Endothelial cell of umbilical vein (primary cell): ENCODE measurements at regions of chr1 and their contacts with region 1.

Region 1: GRCh38 chr1:241531195-241532161 is 700 bp upstream of the KMO start:
- DNase-seq: peak; percentile 79
- H3K4me3 ChIP-seq: peak overlapping the region; percentile 35 to 93 (median 84)
- H3K27ac ChIP-seq: no peak overlapping the region
- H3K4me1 ChIP-seq: peaks cover 8% of the 10 kb centered on the region
- H3K27me3 ChIP-seq: peaks cover 22 to 57% of the 10 kb centered on the region in 2 experiments
- CTCF ChIP-seq: peak; percentile 31 to 34
- POLR2A ChIP-seq: no peak

Region 2: GRCh38 chr1:241507189-241507863 is 24.2 kb before region 1 on chr1:
- CTCF ChIA-PET with region 1: no interaction called
- POLR2A ChIA-PET with region 1: no interaction called
- dilution Hi-C with region 1: no loop called
- intact Hi-C with region 1: no loop called
- DNase-seq: peak; percentile 36
- H3K4me3 ChIP-seq: no peak overlapping the region
- H3K27ac ChIP-seq: peak overlapping the region; percentile 45
- H3K4me1 ChIP-seq: peaks cover 26% of the 10 kb centered on the region
- H3K27me3 ChIP-seq: no peaks in the 10 kb centered on the region
- CTCF ChIP-seq: no peak
- POLR2A ChIP-seq: no peak

Region 3: DNA sequence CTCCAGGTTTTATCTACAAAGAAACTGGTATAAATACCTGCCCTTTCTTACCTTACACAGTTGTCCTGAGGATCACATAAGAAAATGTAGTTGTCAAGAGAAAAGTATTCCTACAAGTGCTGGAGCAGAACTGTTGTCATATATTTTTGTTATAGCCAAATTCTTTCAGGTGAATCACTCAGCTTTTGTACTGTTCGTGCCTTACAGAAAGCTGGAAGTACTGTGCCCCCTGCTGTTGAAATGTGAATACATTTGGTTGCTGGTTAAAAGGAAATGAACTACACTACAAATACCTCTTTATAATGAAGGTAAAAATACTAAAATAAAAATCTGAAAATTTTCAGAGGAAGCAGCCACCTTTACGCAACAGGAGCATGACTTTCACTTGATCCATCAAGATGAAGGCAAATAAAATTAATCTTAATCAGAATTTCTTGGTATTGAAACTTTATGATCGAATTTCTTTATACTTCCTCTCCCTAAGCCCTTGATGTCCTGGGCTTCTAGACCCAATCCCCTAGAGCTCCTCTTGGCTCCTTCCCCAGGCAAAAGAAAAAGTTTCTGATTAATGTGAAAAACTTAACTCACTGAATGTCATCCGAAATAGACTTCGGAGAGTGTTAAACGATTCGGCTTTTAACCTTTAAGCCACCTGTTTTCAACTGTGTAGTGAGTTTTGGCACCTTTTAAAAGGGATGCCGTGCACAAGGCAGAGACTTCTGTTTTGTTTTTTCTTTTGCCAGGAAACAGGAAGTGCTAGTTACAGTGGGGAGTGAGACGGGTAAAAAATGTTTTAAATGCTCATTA is 96.2 kb after region 1 on chr1:
- CTCF ChIA-PET with region 1: interaction called, 8 read pairs
- POLR2A ChIA-PET with region 1: no interaction called
- dilution Hi-C with region 1: no loop called
- intact Hi-C with region 1: loop called (anchors 1 kb)
- DNase-seq: peak; percentile 72
- H3K4me3 ChIP-seq: no peak overlapping the region
- H3K27ac ChIP-seq: no peak overlapping the region
- H3K4me1 ChIP-seq: no peaks in the 10 kb centered on the region
- H3K27me3 ChIP-seq: no peaks in the 10 kb centered on the region
- CTCF ChIP-seq: peak; percentile 39 to 51
- POLR2A ChIP-seq: no peak

Region 4: DNA sequence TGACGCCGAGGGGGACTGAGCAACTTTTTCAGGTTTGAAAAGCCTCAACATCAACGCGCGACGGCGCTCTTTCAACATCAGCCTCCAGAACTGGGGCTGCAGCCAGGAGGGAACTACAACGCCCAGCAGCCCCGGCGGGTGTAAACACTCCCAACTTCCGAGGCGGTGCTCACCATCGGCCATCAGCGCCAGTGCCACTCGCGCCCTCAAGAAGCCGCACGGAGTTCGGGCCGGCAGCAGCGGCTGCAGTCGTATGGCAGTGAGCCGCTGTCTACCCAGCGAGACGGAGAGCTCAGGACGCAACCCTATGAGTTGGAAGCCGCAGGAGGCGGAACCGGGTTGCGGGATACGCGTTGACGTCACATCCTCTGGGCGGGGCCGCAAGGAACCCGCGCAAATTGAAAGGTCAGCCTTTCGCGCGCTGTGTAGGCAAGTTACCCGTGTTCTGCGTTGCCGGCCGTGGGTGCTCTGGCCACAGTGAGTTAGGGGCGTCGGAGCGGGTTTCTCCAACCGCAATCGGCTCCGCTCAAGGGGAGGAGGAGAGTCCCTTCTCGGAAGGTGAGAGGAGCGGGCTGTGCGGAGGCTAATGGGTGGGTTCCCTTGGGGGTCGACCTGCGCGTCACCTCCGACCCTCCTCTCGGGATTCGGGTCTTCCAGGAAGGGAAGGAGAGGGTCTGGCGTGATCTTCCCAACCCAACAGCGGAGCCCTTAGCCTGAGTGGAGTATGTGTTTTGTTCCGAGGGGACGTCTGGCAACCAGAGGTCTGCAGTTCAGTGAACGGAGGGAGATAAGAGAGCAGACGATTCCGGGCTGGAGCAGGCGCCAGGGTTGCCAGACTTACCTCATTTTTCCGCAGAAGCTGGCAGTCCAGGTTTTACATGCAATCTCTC is 316.6 kb after region 1 on chr1 and contains the start of gene EXO1:
- CTCF ChIA-PET with region 1: interaction called, 4 read pairs
- POLR2A ChIA-PET with region 1: no interaction called
- dilution Hi-C with region 1: no loop called
- intact Hi-C with region 1: loop called (anchors 1 kb)
- DNase-seq: peak; percentile 94
- H3K4me3 ChIP-seq: peak within 1 kb of the TSS; percentile 33 to 69 (median 61)
- H3K27ac ChIP-seq: peak within 1 kb of the TSS; percentile 85
- H3K4me1 ChIP-seq: peaks cover 12% of the 10 kb centered on the region
- H3K27me3 ChIP-seq: peaks cover 3 to 7% of the 10 kb centered on the region in 2 experiments
- CTCF ChIP-seq: peak; percentile 32 to 37
- POLR2A ChIP-seq: peak; percentile 58
- total RNA-seq, gene EXO1: 19.8 and 23.5 TPM in 2 replicates

Region 5: DNA sequence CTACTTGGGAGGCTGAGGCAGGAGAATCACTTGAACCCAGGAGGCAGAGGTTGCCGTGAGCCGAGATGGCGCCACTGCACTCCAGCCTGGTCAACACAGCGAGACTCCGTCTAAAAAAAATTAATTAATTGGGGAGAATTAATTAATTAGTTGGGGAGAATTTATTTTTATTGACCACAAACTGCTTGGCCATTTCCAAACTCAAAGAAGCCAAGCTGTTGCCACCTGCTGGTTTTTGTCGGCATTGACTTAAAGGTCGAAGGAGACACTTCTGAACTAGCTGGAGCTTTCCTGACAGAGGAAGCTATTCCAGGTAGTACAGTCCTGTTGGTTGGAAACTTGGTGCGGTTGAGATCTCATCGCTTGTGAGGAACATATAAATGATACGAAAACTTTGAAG is 454.3 kb after region 1 on chr1:
- CTCF ChIA-PET with region 1: interaction called, 3 read pairs
- POLR2A ChIA-PET with region 1: no interaction called
- dilution Hi-C with region 1: no loop called
- intact Hi-C with region 1: loop called (anchors 1 kb)
- DNase-seq: peak; percentile 31
- H3K4me3 ChIP-seq: no peak overlapping the region
- H3K27ac ChIP-seq: no peak overlapping the region
- H3K4me1 ChIP-seq: no peaks in the 10 kb centered on the region
- H3K27me3 ChIP-seq: no peaks in the 10 kb centered on the region
- CTCF ChIP-seq: peak; percentile 25 to 37
- POLR2A ChIP-seq: no peak

Region 6: DNA sequence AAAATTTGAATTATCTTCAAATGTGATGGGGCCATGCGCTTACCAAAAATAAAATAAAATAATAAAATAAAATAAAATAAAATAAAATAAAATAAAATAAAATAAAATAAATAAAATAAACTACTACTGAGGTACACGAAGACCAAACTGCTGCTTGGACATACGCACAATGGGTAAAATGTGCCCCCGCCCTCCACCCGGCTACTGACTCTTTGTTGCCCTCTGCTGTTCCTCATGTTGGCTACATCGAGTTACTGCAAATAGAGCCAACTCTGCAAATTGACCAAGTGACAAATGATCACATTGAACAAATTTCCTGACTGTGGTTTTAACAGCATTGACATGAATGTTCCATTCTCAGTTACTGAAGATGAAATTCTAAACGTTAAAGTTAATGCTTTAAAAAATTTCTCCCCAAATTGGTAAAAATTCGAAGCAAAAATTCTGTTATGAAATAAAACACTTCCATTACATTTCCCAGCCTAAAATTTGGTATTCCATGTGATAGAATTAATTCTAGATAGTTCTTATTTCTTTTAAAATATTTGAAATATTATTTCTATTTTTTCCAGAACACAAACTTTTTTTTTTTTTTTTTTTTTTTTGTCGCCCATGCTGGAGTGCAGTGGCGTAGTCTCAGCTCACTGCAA is 486.2 kb after region 1 on chr1:
- CTCF ChIA-PET with region 1: no interaction called
- POLR2A ChIA-PET with region 1: no interaction called
- dilution Hi-C with region 1: no loop called
- intact Hi-C with region 1: loop called (anchors 1 kb)
- DNase-seq: peak; percentile 56
- H3K4me3 ChIP-seq: no peak overlapping the region
- H3K27ac ChIP-seq: no peak overlapping the region
- H3K4me1 ChIP-seq: no peaks in the 10 kb centered on the region
- H3K27me3 ChIP-seq: no peaks in the 10 kb centered on the region
- CTCF ChIP-seq: peak; percentile 58 to 66
- POLR2A ChIP-seq: no peak